Activated CD4-positive, alpha-beta memory T cell treated with anti-CD3 and anti-CD28 coated beads for 36 hours (primary cell): ENCODE measurements at regions of chr16 and their contacts with region 1.

Region 1: GRCh38 chr16:19067349-19068236 is at the start of gene COQ7:
- DNase-seq: peak; percentile 99
- H3K4me3 Mint-ChIP-seq: peak within 1 kb of the TSS; percentile 91
- H3K27ac Mint-ChIP-seq: peak within 1 kb of the TSS; percentile 93
- H3K4me1 Mint-ChIP-seq: peaks cover 7% of the 10 kb centered on the region
- H3K27me3 Mint-ChIP-seq: no peaks in the 10 kb centered on the region
- total RNA-seq, gene COQ7: 14.1 to 15.2 TPM

Region 2: DNA sequence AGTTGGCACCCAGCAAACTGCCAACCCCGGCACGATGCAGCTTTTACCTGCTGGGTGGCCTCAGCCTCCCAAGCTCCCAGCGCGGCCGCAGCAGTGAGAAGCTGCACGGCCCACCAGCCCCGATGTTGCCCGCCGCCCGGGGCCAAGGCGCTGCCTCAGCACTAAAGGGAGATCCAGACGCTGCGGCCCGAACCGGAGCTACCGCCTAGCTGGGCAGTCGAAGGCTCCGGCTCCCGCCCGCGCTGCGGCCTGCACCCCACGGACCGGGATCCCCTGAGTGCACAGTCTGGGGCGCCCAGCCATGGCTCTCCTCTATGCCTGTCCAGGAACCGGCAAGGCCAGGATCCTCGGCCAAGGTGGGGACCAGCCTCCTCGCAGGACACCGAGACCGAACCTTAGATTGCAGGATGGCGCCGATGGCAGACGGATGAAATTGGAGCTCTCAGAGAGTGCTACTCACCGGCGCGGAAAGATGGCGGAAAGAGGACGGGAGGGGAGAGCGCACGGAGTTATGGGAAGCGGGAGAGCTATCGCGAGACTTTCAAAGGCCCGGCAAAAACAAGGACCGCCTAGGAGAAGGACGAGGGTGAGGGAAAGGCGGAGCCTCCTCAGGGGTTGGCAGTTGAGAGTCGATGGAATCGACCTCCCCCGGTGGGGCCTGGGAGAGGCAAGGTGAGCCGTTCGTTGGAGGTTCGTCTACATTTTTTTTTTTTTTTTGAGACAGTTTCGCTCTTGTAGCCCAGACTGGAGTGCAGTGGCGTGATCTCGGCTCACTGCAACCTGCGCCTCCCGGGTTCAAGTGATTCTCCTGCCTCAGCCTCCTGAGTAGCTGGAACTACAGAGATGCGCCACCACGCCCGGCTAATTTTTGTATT is 277.5 kb before region 1 on chr16 and contains the start of gene RPS15A:
- CTCF ChIA-PET with region 1: interaction called, 5 read pairs
- POLR2A ChIA-PET with region 1: interaction called, 3 read pairs
- intact Hi-C with region 1: loop called (anchors 5 kb)
- DNase-seq: peak; percentile 96
- H3K4me3 Mint-ChIP-seq: peak within 1 kb of the TSS; percentile 97
- H3K27ac Mint-ChIP-seq: peak within 1 kb of the TSS; percentile 99
- H3K4me1 Mint-ChIP-seq: peaks cover 41% of the 10 kb centered on the region
- H3K27me3 Mint-ChIP-seq: no peaks in the 10 kb centered on the region
- total RNA-seq, gene RPS15A: 2,060 to 2,087 TPM

Region 3: GRCh38 chr16:18932243-18932981 is 135.2 kb before region 1 on chr16:
- CTCF ChIA-PET with region 1: no interaction called
- POLR2A ChIA-PET with region 1: no interaction called
- intact Hi-C with region 1: loop called (anchors 2 kb)
- DNase-seq: no peak
- H3K4me3 Mint-ChIP-seq: no peak overlapping the region
- H3K27ac Mint-ChIP-seq: no peak overlapping the region
- H3K4me1 Mint-ChIP-seq: peaks cover 2% of the 10 kb centered on the region
- H3K27me3 Mint-ChIP-seq: no peaks in the 10 kb centered on the region

Region 4: DNA sequence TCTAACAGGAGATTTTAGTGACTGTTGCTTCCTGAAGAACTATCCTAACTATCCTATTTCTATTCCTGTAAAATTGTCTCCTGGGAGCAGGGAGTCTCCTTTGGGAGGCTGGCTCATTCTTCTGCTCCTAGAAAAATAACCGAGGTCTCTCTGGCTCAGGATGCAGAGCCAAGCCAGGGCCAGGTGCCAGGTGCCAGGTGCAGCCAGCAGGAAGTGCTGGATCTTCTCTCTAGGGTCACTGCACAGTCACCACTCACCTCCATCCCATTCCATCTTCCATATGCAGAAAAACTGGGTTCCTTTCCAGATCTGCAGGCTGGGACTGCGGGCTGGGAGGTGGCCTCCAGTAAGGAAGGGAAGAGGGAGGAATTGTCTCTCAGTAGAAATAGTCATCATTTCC is 87.7 kb before region 1 on chr16:
- CTCF ChIA-PET with region 1: interaction called, 4 read pairs
- POLR2A ChIA-PET with region 1: no interaction called
- intact Hi-C with region 1: loop called (anchors 10 kb)
- DNase-seq: no peak
- H3K4me3 Mint-ChIP-seq: no peak overlapping the region
- H3K27ac Mint-ChIP-seq: no peak overlapping the region
- H3K4me1 Mint-ChIP-seq: no peaks in the 10 kb centered on the region
- H3K27me3 Mint-ChIP-seq: peaks cover 29% of the 10 kb centered on the region

Region 5: GRCh38 chr16:19245326-19245925 is 177.8 kb after region 1 on chr16:
- CTCF ChIA-PET with region 1: no interaction called
- POLR2A ChIA-PET with region 1: no interaction called
- intact Hi-C with region 1: no loop called
- DNase-seq: no peak
- H3K4me3 Mint-ChIP-seq: no peak overlapping the region
- H3K27ac Mint-ChIP-seq: no peak overlapping the region
- H3K4me1 Mint-ChIP-seq: no peaks in the 10 kb centered on the region
- H3K27me3 Mint-ChIP-seq: no peaks in the 10 kb centered on the region

Region 6: GRCh38 chr16:19831678-19832077 is 764.1 kb after region 1 on chr16:
- CTCF ChIA-PET with region 1: no interaction called
- POLR2A ChIA-PET with region 1: no interaction called
- intact Hi-C with region 1: no loop called
- DNase-seq: no peak
- H3K4me3 Mint-ChIP-seq: no peak overlapping the region
- H3K27ac Mint-ChIP-seq: no peak overlapping the region
- H3K4me1 Mint-ChIP-seq: no peaks in the 10 kb centered on the region
- H3K27me3 Mint-ChIP-seq: no peaks in the 10 kb centered on the region